Activated naive CD4-positive, alpha-beta T cell treated with anti-CD3 and anti-CD28 coated beads for 36 hours (primary cell): ENCODE measurements at regions of chr19 and their contacts with region 1.

Region 1: GRCh38 chr19:35592226-35592625 is 6.3 kb downstream of the PMIS2 start:
- DNase-seq: peak; percentile 35
- H3K4me3 Mint-ChIP-seq: no peak overlapping the region
- H3K27ac Mint-ChIP-seq: no peak overlapping the region
- H3K4me1 Mint-ChIP-seq: peaks cover 3% of the 10 kb centered on the region
- H3K27me3 Mint-ChIP-seq: no peaks in the 10 kb centered on the region

Region 2: DNA sequence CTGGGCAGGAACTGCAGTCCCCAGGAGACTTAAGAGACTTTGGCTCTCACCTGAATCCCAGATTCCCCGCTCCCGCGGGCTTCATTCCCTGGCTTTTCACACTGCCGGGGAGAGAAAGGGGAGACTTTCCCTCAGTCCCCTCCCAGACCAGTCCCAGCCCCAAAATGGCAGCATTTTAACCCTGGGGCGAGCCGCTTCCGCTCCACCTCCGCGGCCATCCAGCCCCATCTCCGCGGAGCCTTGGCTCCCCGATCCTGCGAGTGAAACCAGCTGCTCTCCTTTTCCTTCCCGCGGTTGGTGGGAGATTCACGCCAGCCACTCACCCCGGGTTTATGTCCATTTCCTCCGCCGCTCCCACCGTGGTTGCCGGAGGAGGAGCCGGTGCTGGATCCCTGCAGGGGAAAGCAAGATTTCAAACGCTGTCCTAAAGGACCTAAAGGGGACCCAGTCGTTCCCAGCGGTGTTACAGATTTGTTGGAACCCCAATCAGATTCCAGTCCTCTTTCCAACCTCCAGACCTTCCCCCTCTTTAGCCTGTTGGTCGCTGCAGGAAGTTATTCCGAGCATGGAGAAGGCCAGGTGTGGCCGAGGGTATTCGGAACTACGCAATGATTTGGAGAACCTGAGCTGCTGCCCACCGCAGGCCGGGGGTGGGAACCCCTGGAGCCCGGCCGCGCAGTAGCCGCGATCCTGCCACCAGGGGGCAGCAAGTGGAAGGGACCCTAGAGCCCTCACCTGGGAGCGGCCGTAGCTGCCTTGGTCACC is 82.2 kb before region 1 on chr19:
- CTCF ChIA-PET with region 1: interaction called, 15 read pairs
- intact Hi-C with region 1: loop called (anchors 1 kb)
- DNase-seq: peak; percentile 80
- H3K4me3 Mint-ChIP-seq: peak overlapping the region; percentile 57
- H3K27ac Mint-ChIP-seq: no peak overlapping the region
- H3K4me1 Mint-ChIP-seq: peaks cover 15% of the 10 kb centered on the region
- H3K27me3 Mint-ChIP-seq: peaks cover 36% of the 10 kb centered on the region

Region 3: DNA sequence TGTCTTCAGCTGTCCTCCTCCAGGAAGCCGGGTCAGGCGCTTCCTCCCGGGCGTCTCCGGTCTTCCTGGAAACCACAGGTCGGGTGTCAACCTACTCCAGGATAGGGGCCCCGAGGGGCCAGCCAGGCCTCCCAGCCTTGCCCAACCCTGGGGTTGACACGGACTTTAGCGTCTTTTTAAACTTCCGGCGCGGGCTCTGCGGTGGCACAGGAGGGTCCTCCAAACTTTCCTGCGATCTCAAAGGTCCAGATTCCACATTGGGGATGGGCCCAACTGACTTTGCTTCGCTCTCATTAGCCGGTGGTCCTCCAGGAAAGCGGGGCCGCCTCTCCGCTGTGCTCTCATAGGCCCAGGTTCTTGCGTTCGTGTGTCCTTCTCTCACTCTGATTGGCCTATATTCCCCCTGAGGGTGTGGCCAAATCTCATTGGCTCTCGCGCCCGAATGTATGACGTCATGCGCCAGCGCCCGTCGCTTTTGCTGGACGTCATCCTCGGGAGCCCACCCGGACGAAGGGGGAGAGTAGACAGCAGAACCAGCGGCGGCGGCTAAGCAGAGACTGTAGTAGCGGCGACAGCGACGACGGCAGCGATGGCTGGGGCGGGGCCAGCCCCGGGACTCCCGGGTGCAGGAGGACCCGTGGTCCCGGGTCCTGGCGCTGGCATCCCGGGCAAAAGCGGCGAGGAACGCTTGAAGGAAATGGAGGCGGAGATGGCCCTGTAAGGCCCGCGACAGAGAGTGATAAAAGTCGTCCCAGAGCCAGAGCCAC is 36.5 kb after region 1 on chr19 and contains the start of gene RBM42:
- CTCF ChIA-PET with region 1: no interaction called
- intact Hi-C with region 1: loop called (anchors 1 kb)
- DNase-seq: peak; percentile 97
- H3K4me3 Mint-ChIP-seq: peak within 1 kb of the TSS; percentile 100
- H3K27ac Mint-ChIP-seq: peak within 1 kb of the TSS; percentile 95
- H3K4me1 Mint-ChIP-seq: peaks cover 19% of the 10 kb centered on the region
- H3K27me3 Mint-ChIP-seq: no peaks in the 10 kb centered on the region
- total RNA-seq, gene RBM42: 64.2 to 66.2 TPM

Region 4: GRCh38 chr19:35639321-35639639 is 47.1 kb after region 1 on chr19:
- CTCF ChIA-PET with region 1: no interaction called
- intact Hi-C with region 1: no loop called
- DNase-seq: no peak
- H3K4me3 Mint-ChIP-seq: no peak overlapping the region
- H3K27ac Mint-ChIP-seq: no peak overlapping the region
- H3K4me1 Mint-ChIP-seq: peaks cover 20% of the 10 kb centered on the region
- H3K27me3 Mint-ChIP-seq: no peaks in the 10 kb centered on the region